ENCODE measurements at regions of chr6 and their contacts with region 1.

Region 1: DNA sequence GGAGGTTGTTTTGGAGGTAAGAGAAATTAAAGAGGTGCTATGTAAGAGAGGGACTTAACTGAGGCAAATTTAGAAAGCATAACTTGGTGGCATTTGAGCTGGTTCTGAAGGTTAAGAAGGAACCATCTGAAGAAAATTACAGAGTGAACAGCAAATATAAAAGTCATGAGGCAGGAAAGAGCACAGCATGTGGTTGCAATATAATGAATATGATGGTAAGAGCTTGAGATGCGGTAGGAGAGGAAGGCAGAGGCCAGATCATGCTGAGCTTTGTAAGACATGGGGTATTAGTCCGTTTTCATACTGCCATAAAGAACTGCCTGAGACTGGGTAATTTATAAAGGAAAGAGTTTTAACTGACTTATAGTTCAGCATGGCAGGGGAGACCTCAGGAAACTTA is 279.1 kb downstream of the UTRN start:
- DNase-seq: no peak
- CTCF ChIP-seq: no peak

Region 2: DNA sequence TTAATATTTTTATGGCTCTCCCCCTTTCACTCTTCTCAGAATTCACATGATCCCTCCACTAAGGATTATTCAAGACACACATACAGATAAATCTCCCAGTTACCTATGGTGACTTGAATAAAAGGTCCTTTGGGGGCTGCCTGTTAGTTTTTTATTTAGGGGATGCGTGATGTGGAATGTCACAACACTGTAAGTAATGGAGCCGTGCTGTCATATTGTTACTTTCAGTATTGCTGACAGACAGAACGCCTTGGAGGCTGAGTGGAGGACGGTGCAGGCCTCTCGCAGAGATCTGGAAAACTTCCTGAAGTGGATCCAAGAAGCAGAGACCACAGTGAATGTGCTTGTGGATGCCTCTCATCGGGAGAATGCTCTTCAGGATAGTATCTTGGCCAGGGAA is 12.7 kb after region 1 on chr6:
- CTCF ChIA-PET with region 1: interaction called, 11 read pairs
- POLR2A ChIA-PET with region 1: no interaction called
- DNase-seq: no peak
- CTCF ChIP-seq: no peak